Activated T-helper 1 cell treated with anti-CD3 and anti-CD28 coated beads, Interleukin-12 subunit alpha, Interleukin-12 subunit beta, Interleukin-2, Interleukin-4 antibody, amounts not matched to agents 30 ng/mL and 10 ng/mL and 1 ng/mL, durations not matched to agents 14 hours and 24 hours and 36 hours (primary cell): ENCODE measurements at regions of chr2 and their contacts with region 1.

Region 1: GRCh38 chr2:216139884-216140283 is 30.7 kb downstream of the XRCC5 start:
- DNase-seq: no peak
- H3K4me3 Mint-ChIP-seq: no peak overlapping the region
- H3K27ac Mint-ChIP-seq: peak overlapping the region; percentile 31
- H3K4me1 Mint-ChIP-seq: peaks cover 49% of the 10 kb centered on the region
- H3K27me3 Mint-ChIP-seq: no peaks in the 10 kb centered on the region

Region 2: DNA sequence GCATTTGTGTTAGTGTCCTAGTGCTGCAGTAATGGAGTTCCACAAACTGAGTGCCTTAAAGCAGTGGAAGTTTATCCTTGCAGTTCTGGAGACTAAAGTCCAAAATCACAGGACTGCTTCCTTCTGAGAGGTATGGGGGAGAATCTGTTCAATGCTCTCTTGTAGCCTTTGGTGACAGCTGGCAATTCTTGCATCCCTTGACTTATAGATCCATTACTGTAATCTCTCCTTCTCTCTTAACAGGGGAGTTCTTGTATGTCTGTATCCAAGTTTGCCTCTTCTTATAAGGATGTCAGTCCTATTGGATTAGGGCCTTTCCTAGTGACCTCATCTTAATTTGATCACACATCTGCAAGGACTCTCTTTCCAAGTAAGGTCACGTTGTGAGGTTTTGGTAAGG is 39.1 kb after region 1 on chr2:
- intact Hi-C with region 1: loop called (anchors 5 kb)
- DNase-seq: no peak
- H3K4me3 Mint-ChIP-seq: no peak overlapping the region
- H3K27ac Mint-ChIP-seq: no peak overlapping the region
- H3K4me1 Mint-ChIP-seq: peaks cover 46% of the 10 kb centered on the region
- H3K27me3 Mint-ChIP-seq: no peaks in the 10 kb centered on the region

Region 3: GRCh38 chr2:216195565-216196029 is 55.7 kb after region 1 on chr2:
- intact Hi-C with region 1: no loop called
- DNase-seq: no peak
- H3K4me3 Mint-ChIP-seq: no peak overlapping the region
- H3K27ac Mint-ChIP-seq: peak overlapping the region; percentile 78
- H3K4me1 Mint-ChIP-seq: peaks cover 65% of the 10 kb centered on the region
- H3K27me3 Mint-ChIP-seq: no peaks in the 10 kb centered on the region

Region 4: DNA sequence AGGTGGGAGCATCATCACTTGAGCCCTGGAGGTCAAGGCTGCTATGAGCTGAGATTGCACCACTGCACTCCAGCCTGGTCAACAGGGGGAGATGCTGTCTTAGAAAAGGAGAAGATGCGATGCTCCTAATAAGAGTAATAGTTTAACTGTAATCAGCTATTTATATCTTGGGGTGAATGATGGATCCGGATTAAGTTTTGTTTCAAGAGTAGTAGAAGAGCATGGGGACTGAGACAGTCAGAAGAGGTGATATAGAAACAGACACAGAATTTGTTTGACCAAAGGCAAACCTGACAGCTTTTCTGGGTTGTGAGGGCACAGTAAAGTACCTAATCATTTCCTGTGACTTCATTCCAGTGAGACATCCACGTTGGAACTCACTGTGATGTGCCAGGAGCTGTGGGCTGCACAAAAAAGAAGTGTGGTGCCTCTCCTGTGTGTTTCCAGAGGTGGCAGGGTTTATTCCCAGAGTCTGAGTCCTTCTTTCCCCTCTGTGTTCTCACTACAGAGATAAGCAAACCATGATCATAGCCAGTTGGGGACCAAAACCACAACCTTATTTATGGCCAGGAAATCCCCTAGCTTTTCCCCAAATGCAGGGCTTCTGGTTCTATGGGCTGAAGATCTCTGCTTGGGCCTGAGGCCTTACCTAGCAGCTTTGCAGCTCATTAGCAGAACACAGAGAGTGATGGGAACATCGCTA is 82.9 kb after region 1 on chr2:
- intact Hi-C with region 1: no loop called
- DNase-seq: peak; percentile 14
- H3K4me3 Mint-ChIP-seq: peak overlapping the region; percentile 3
- H3K27ac Mint-ChIP-seq: peak overlapping the region; percentile 75
- H3K4me1 Mint-ChIP-seq: peaks cover 56% of the 10 kb centered on the region
- H3K27me3 Mint-ChIP-seq: no peaks in the 10 kb centered on the region